A673 (cell line): ENCODE measurements at regions of chr16 and their contacts with region 1.

Region 1: GRCh38 chr16:3150346-3151218 is 15.8 kb downstream of the ZNF213 start:
- DNase-seq: peak; percentile 98
- H3K4me3 ChIP-seq: peak overlapping the region; percentile 63
- H3K27ac ChIP-seq: peak overlapping the region; percentile 70
- H3K4me1 ChIP-seq: no peaks in the 10 kb centered on the region
- H3K27me3 ChIP-seq: no peaks in the 10 kb centered on the region
- CTCF ChIP-seq: no peak

Region 2: GRCh38 chr16:2964475-2965336 is 185.9 kb before region 1 on chr16:
- CTCF ChIA-PET with region 1: no interaction called
- POLR2A ChIA-PET with region 1: no interaction called
- intact Hi-C with region 1: no loop called
- DNase-seq: peak; percentile 93
- H3K4me3 ChIP-seq: peak overlapping the region; percentile 52
- H3K27ac ChIP-seq: no peak overlapping the region
- H3K4me1 ChIP-seq: peaks cover 29% of the 10 kb centered on the region
- H3K27me3 ChIP-seq: no peaks in the 10 kb centered on the region
- CTCF ChIP-seq: no peak

Region 3: GRCh38 chr16:3059000-3059722 is 91.4 kb before region 1 on chr16:
- CTCF ChIA-PET with region 1: interaction called, 5 read pairs
- POLR2A ChIA-PET with region 1: no interaction called
- intact Hi-C with region 1: loop called (anchors 10 kb)
- DNase-seq: peak; percentile 87
- H3K4me3 ChIP-seq: peak overlapping the region; percentile 93
- H3K27ac ChIP-seq: peak overlapping the region; percentile 88
- H3K4me1 ChIP-seq: peaks cover 5% of the 10 kb centered on the region
- H3K27me3 ChIP-seq: no peaks in the 10 kb centered on the region
- CTCF ChIP-seq: peak; percentile 69

Region 4: GRCh38 chr16:3188925-3189825 is 38.6 kb after region 1 on chr16:
- CTCF ChIA-PET with region 1: no interaction called
- POLR2A ChIA-PET with region 1: interaction called, 3 read pairs
- intact Hi-C with region 1: loop called (anchors 2 kb)
- DNase-seq: peak; percentile 89
- H3K4me3 ChIP-seq: peak overlapping the region; percentile 75
- H3K27ac ChIP-seq: peak overlapping the region; percentile 24
- H3K4me1 ChIP-seq: peaks cover 16% of the 10 kb centered on the region
- H3K27me3 ChIP-seq: no peaks in the 10 kb centered on the region
- CTCF ChIP-seq: no peak

Region 5: GRCh38 chr16:3443108-3444031 is 292.8 kb after region 1 on chr16 and contains the starts of genes NAA60 and ZNF597:
- CTCF ChIA-PET with region 1: interaction called, 15 read pairs
- POLR2A ChIA-PET with region 1: no interaction called
- intact Hi-C with region 1: no loop called
- DNase-seq: peak; percentile 94
- H3K4me3 ChIP-seq: peak within 1 kb of the TSS; percentile 67
- H3K27ac ChIP-seq: peak within 1 kb of the TSS; percentile 73
- H3K4me1 ChIP-seq: no peaks in the 10 kb centered on the region
- H3K27me3 ChIP-seq: no peaks in the 10 kb centered on the region
- CTCF ChIP-seq: no peak
- total RNA-seq, gene NAA60: 39.4 and 40.7 TPM in 2 replicates
- total RNA-seq, gene ZNF597: 2.4 and 2.8 TPM in 2 replicates